ENCODE measurements at regions of chr1 and their contacts with region 1.

Region 1: DNA sequence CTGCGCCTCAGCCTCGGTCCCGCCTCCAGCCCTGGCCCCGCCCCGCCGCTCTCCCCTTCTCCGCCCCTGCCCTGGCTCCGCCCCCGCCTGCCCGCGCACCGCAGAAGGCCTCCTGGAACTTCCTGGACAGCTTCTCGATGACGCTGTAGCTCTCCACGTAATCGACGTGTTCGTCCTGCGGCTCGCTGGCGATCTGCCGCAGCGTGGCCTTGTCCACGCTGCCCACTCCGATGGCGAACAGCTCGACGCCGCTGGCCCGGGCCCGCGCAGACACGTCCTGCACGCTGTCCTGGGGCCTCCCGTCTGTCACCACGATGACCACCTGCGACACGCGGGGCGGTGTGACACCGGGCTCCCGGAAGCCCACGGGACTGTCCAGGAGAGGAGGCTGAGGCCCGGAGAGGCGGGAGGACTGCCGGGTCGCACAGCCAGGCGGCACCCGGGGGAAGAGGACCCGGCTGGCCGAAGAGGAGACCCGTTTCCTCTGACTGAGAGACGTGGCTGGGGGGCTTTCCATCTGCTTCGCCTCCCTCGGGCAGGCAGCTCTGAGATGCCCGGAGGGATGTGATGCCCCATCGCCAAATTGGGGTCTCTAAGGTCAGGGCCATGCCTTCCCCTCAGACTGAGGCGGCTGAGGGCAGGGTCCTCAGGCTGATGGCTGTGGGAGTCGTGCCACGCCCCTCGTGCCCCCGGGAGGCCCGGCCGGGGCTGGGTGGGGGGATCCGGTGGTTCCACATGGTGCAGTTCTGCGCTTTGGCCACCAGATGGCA is 4.6 kb downstream of the MATN1 start:
- DNase-seq: peak; percentile 83
- H3K4me3 ChIP-seq: peak overlapping the region; percentile 80
- H3K27ac ChIP-seq: peak overlapping the region; percentile 40
- H3K4me1 ChIP-seq: peaks cover 28% of the 10 kb centered on the region
- CTCF ChIP-seq: peak; percentile 96

Region 2: GRCh38 chr1:30748699-30749401 is 30.0 kb after region 1 on chr1:
- CTCF ChIA-PET with region 1: interaction called, 20 read pairs
- POLR2A ChIA-PET with region 1: interaction called, 4 read pairs
- intact Hi-C with region 1: loop called (anchors 1 kb)
- DNase-seq: no peak
- H3K4me3 ChIP-seq: no peak overlapping the region
- H3K27ac ChIP-seq: peak overlapping the region; percentile 99
- H3K4me1 ChIP-seq: peaks cover 100% of the 10 kb centered on the region
- CTCF ChIP-seq: no peak

Region 3: DNA sequence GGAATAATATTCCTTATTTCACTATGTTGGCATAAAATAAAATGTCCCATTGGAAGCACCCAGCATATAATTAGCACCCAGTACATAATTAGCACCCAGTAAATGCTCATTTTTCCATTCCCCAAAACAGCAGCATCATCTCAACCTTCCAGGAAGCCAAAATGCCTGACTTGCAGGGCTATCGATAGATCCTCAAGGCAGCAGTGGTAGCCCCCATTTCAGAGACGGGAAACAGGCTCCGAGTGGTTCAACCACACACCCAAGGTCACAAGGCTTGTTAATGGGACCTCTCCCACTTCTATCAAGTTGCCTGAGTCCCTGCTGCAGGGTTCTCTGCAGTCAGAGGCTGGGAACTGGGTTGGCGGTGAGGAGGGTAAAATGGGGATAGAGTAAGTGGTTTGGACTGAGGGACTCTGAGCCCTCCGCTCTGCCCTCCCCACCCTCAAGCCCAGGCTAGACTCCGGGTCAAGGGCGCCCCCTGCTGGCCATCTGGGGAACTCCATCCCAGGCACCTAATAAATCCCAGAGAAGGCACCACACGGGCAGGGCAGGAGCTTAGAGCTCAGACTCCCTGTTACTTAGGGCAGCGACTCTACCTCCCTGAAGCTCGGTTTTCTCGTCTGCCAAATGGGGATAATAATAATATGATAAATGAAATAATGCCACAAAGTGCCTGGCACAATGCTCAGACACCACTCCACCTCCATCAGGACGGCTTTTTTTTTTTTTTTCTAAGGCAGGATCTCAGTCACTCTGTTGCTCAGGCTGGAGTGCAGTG is 60.7 kb after region 1 on chr1:
- CTCF ChIA-PET with region 1: interaction called, 61 read pairs
- POLR2A ChIA-PET with region 1: interaction called, 9 read pairs
- intact Hi-C with region 1: loop called (anchors 1 kb)
- DNase-seq: peak; percentile 86
- H3K4me3 ChIP-seq: no peak overlapping the region
- H3K27ac ChIP-seq: no peak overlapping the region
- H3K4me1 ChIP-seq: peaks cover 12% of the 10 kb centered on the region
- CTCF ChIP-seq: peak; percentile 97

Region 4: GRCh38 chr1:30911046-30911954 is 192.5 kb after region 1 on chr1:
- CTCF ChIA-PET with region 1: interaction called, 3 read pairs
- POLR2A ChIA-PET with region 1: no interaction called
- intact Hi-C with region 1: loop called (anchors 1 kb)
- DNase-seq: peak; percentile 74
- H3K4me3 ChIP-seq: no peak overlapping the region
- H3K27ac ChIP-seq: no peak overlapping the region
- H3K4me1 ChIP-seq: peaks cover 5% of the 10 kb centered on the region
- CTCF ChIP-seq: peak; percentile 94